Heart right ventricle (tissue), 16 donors: ENCODE measurements at regions of chr4 and their contacts with region 1.

Region 1: GRCh38 chr4:47463235-47463956 is at the start of gene COMMD8:
- DNase-seq: peak; percentile 96 to 97
- ATAC-seq: peak; percentile 99 to 100 (median 99)
- H3K4me3 ChIP-seq: peak within 1 kb of the TSS; percentile 60 to 92 (median 86)
- H3K27ac ChIP-seq: peak within 1 kb of the TSS; percentile 32 to 95 (median 88)
- H3K4me1 ChIP-seq: peaks cover 0 to 29% (median 16%) of the 10 kb centered on the region in 9 donors
- H3K27me3 ChIP-seq: no peaks in the 10 kb centered on the region
- CTCF ChIP-seq: peak in 7 of 9 donors; percentile 10 to 57 (median 43)
- total RNA-seq, gene COMMD8: 11.5 to 22.2 (median 15.2) TPM

Region 2: DNA sequence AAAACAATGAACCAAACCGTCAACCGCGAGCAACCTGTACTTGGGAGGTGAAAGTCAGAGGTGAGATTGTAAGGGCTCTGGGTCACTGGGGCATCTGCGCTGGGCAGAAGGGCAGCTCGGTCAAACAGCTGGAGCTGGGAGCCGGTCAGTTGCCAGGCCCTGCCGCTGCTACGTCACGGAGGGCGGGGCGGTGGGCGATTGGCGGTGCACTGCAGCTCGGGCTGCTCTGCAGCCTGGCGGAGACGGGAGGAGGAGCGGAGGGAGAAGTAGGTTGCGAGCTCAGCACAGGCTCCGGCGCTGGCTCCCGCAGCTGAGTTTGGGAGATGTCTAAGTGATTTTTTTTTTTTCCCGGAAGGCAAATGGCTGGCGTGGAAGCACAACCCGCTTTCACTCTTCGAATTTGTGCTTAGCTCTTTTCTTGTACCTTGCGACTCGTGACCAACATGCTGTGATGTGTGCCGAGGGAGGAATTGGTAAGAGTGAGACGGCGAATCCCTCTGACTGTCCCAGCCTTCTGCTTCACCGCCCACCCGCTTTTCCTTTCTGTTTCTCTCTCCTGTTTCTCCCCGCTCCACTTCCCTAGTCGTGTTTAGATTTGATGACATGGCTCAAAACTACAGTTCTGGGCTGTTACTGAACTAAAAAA is 21.8 kb after region 1 on chr4 and contains the start of gene ATP10D:
- intact Hi-C with region 1: loop called in 4 of 10 experiments (anchors 1 to 2 kb)
- DNase-seq: peak; percentile 96 to 98
- ATAC-seq: peak; percentile 99 to 100 (median 100)
- H3K4me3 ChIP-seq: peak within 1 kb of the TSS; percentile 46 to 77 (median 66)
- H3K27ac ChIP-seq: peak within 1 kb of the TSS; percentile 83 to 95 (median 90)
- H3K4me1 ChIP-seq: peaks cover 0 to 50% (median 27%) of the 10 kb centered on the region in 9 donors
- H3K27me3 ChIP-seq: no peaks in the 10 kb centered on the region
- CTCF ChIP-seq: peak in 6 of 9 donors; percentile 21 to 58 (median 36)
- total RNA-seq, gene ATP10D: 7.7 to 15.7 (median 8.9) TPM

Region 3: GRCh38 chr4:47510506-47511143 is 47.2 kb after region 1 on chr4:
- intact Hi-C with region 1: no loop called
- DNase-seq: no peak
- ATAC-seq: peak in 2 of 8 donors; percentile 41 to 49
- H3K4me3 ChIP-seq: no peak overlapping the region
- H3K27ac ChIP-seq: peak overlapping the region in 5 of 10 donors; percentile 23 to 55 (median 35)
- H3K4me1 ChIP-seq: peaks cover 0 to 36% (median 18%) of the 10 kb centered on the region in 9 donors
- H3K27me3 ChIP-seq: no peaks in the 10 kb centered on the region
- CTCF ChIP-seq: peak in 4 of 9 donors; percentile 11 to 39 (median 26)